ENCODE measurements at regions of chr14 and their contacts with region 1.

Region 1: GRCh38 chr14:22570132-22570949 is 18.7 kb downstream of the DAD1 start:
- DNase-seq: peak; percentile 97
- ATAC-seq: peak; percentile 90
- H3K4me3 ChIP-seq: peak overlapping the region; percentile 25 to 60 (median 37)
- H3K4me3 Mint-ChIP-seq: peak overlapping the region; percentile 44
- H3K27ac ChIP-seq: peak overlapping the region; percentile 74 to 78
- H3K27ac Mint-ChIP-seq: peak overlapping the region; percentile 54
- H3K4me1 ChIP-seq: peaks cover 46 to 53% of the 10 kb centered on the region in 2 donors
- H3K4me1 Mint-ChIP-seq: peaks cover 47% of the 10 kb centered on the region
- H3K27me3 ChIP-seq: no peaks in the 10 kb centered on the region
- H3K27me3 Mint-ChIP-seq: no peaks in the 10 kb centered on the region
- CTCF ChIP-seq: peak; percentile 97

Region 2: DNA sequence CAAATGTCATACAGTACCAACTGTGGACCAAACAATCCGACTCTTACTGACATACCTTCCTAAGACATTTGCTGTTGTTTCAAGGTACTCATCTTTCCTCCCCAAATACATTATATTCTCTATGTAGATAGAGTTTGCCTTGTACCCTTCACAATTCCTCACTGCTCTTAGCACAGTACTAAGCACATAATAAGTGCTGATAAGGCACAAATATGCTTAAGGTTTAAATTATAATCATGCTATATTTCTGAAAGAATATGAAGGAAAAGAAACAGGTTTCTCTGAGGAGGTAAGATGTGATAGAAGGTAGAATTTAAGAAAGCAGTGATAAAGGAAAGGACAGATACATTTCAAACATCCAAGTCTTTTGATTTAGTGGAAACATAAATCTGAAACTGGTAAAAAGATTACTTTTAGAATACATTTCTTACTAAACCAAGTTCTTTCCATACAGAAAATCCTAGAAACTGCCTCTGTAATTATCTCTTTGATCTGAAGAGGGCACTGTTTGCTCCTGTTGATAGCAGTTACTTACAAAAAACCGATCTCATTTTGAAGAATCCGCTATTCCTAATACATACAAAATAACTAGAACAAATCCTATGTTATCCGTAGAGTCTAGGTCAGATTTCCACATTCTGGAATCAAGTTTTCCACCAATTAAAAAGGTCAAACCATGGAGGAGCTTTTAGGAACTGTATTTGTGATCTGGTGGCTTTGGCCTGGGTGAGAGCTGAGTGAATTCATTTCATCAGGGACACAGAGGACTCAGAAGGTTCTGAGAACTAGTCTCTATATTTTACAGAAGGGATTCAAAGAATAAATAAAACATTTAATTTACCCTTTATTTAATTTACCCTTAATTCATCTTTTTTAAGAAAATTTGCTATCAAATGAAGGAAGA is 293.2 kb before region 1 on chr14:
- CTCF ChIA-PET with region 1: no interaction called
- POLR2A ChIA-PET with region 1: no interaction called
- intact Hi-C with region 1: no loop called
- DNase-seq: peak; percentile 46
- ATAC-seq: no peak
- H3K4me3 ChIP-seq: no peak overlapping the region
- H3K4me3 Mint-ChIP-seq: no peak overlapping the region
- H3K27ac ChIP-seq: no peak overlapping the region
- H3K27ac Mint-ChIP-seq: no peak overlapping the region
- H3K4me1 ChIP-seq: peaks cover 12 to 14% of the 10 kb centered on the region in 2 donors
- H3K4me1 Mint-ChIP-seq: peaks cover 16% of the 10 kb centered on the region
- H3K27me3 ChIP-seq: peaks cover 0 to 7% (median 2%) of the 10 kb centered on the region in 4 experiments
- H3K27me3 Mint-ChIP-seq: peaks cover 27% of the 10 kb centered on the region
- CTCF ChIP-seq: peak; percentile 91

Region 3: DNA sequence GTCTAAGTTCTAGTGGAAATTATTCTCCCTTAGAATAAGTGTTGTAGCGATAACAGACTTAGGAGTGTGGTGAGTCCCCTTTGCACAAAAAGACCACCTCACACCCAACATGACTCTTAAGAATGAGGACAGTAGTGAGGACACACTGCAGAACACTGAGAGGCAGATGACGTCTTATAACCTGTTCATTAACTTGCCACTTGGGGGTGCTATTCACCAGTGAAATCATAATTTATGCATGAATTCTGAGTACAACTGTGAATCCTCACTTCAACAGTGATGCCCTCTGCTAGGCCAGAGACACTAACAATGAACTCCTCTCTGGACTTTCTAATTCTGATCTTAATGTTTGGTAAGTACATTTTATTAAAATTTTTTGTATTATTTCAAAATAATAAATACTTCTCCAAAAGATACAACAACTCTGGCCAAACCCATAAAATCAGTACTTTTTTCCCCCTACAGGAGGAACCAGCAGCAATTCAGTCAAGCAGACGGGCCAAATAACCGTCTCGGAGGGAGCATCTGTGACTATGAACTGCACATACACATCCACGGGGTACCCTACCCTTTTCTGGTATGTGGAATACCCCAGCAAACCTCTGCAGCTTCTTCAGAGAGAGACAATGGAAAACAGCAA is 256.0 kb before region 1 on chr14:
- CTCF ChIA-PET with region 1: interaction called, 48 read pairs
- POLR2A ChIA-PET with region 1: interaction called, 3 read pairs
- intact Hi-C with region 1: loop called (anchors 1 kb)
- DNase-seq: peak; percentile 78
- ATAC-seq: peak; percentile 93
- H3K4me3 ChIP-seq: no peak overlapping the region
- H3K4me3 Mint-ChIP-seq: no peak overlapping the region
- H3K27ac ChIP-seq: no peak overlapping the region
- H3K27ac Mint-ChIP-seq: no peak overlapping the region
- H3K4me1 ChIP-seq: no peaks in the 10 kb centered on the region
- H3K4me1 Mint-ChIP-seq: peaks cover 5% of the 10 kb centered on the region
- H3K27me3 ChIP-seq: no peaks in the 10 kb centered on the region
- H3K27me3 Mint-ChIP-seq: no peaks in the 10 kb centered on the region
- CTCF ChIP-seq: peak; percentile 88

Region 4: GRCh38 chr14:22448905-22449599 is 121.3 kb before region 1 on chr14:
- CTCF ChIA-PET with region 1: interaction called, 12 read pairs
- POLR2A ChIA-PET with region 1: no interaction called
- intact Hi-C with region 1: no loop called
- DNase-seq: no peak
- ATAC-seq: peak; percentile 16
- H3K4me3 ChIP-seq: no peak overlapping the region
- H3K4me3 Mint-ChIP-seq: no peak overlapping the region
- H3K27ac ChIP-seq: peak overlapping the region in 1 of 2 donors; percentile 47
- H3K27ac Mint-ChIP-seq: peak overlapping the region; percentile 88
- H3K4me1 ChIP-seq: peaks cover 15 to 17% of the 10 kb centered on the region in 2 donors
- H3K4me1 Mint-ChIP-seq: peaks cover 23% of the 10 kb centered on the region
- H3K27me3 ChIP-seq: no peaks in the 10 kb centered on the region
- H3K27me3 Mint-ChIP-seq: no peaks in the 10 kb centered on the region
- CTCF ChIP-seq: no peak

Region 5: GRCh38 chr14:22519877-22520685 is 50.3 kb before region 1 on chr14:
- CTCF ChIA-PET with region 1: interaction called, 36 read pairs
- POLR2A ChIA-PET with region 1: no interaction called
- intact Hi-C with region 1: no loop called
- DNase-seq: no peak
- ATAC-seq: no peak
- H3K4me3 ChIP-seq: peak overlapping the region in 1 of 5 experiments; percentile 6
- H3K4me3 Mint-ChIP-seq: peak overlapping the region; percentile 55
- H3K27ac ChIP-seq: peak overlapping the region; percentile 56 to 68
- H3K27ac Mint-ChIP-seq: peak overlapping the region; percentile 91
- H3K4me1 ChIP-seq: peaks cover 64 to 91% of the 10 kb centered on the region in 2 donors
- H3K4me1 Mint-ChIP-seq: peaks cover 90% of the 10 kb centered on the region
- H3K27me3 ChIP-seq: no peaks in the 10 kb centered on the region
- H3K27me3 Mint-ChIP-seq: no peaks in the 10 kb centered on the region
- CTCF ChIP-seq: no peak

Region 6: DNA sequence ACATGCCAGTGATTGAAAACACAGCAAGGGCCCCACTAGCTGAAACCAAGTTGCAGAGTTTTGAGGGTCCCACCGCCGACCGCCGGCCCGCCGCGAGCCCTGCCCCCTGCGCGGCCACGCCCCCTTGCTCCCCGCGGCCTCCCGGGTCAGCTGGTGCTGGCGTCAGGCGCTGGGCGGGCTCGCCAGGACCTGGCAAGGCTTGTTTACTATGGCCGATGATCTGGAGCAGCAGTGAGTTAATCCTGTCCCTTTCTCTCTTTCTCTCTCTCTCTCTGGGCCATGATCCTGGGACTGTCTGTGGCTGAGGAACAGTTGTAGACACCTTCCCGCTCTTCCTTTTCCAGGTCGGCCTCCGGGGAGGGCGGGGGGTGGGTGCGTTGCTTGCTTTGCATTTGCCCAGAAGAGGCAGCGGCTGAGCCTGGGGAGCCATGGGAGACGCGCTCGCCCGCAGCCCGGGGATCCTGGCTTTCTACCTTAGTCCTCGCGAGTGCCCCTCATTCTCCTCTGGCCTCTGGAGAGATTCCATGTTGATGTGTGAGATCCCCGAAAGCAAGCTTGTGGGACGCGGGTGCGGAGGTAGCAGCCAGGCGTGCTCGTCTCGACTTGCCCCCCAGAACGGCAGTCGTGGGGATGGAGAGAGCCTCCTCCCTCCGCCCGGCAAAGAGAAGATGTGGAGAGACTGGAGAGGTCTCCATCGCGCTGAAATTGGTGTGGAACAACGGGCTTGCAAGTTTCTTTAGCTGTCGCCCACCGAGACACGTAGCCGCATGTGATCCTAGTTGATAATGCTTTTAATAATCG is 28.0 kb after region 1 on chr14 and contains the start of gene ABHD4:
- CTCF ChIA-PET with region 1: interaction called, 28 read pairs
- POLR2A ChIA-PET with region 1: no interaction called
- intact Hi-C with region 1: no loop called
- DNase-seq: peak; percentile 79
- ATAC-seq: peak; percentile 96
- H3K4me3 ChIP-seq: peak within 1 kb of the TSS; percentile 90 to 97 (median 92)
- H3K4me3 Mint-ChIP-seq: peak within 1 kb of the TSS; percentile 98
- H3K27ac ChIP-seq: peak within 1 kb of the TSS; percentile 46 to 76
- H3K27ac Mint-ChIP-seq: peak within 1 kb of the TSS; percentile 96
- H3K4me1 ChIP-seq: peaks cover 15 to 22% of the 10 kb centered on the region in 2 donors
- H3K4me1 Mint-ChIP-seq: peaks cover 28% of the 10 kb centered on the region
- H3K27me3 ChIP-seq: no peaks in the 10 kb centered on the region
- H3K27me3 Mint-ChIP-seq: peaks cover 3% of the 10 kb centered on the region
- CTCF ChIP-seq: peak; percentile 6
- total RNA-seq, gene ABHD4: 21.8 and 22.7 TPM in 2 replicates

Region 7: GRCh38 chr14:22634233-22634900 is 64.0 kb after region 1 on chr14:
- CTCF ChIA-PET with region 1: no interaction called
- POLR2A ChIA-PET with region 1: no interaction called
- intact Hi-C with region 1: no loop called
- DNase-seq: no peak
- ATAC-seq: no peak
- H3K4me3 ChIP-seq: no peak overlapping the region
- H3K4me3 Mint-ChIP-seq: no peak overlapping the region
- H3K27ac ChIP-seq: no peak overlapping the region
- H3K27ac Mint-ChIP-seq: no peak overlapping the region
- H3K4me1 ChIP-seq: no peaks in the 10 kb centered on the region
- H3K4me1 Mint-ChIP-seq: no peaks in the 10 kb centered on the region
- H3K27me3 ChIP-seq: peaks cover 0 to 9% (median 0%) of the 10 kb centered on the region in 4 experiments
- H3K27me3 Mint-ChIP-seq: peaks cover 33% of the 10 kb centered on the region
- CTCF ChIP-seq: no peak

Region 8: GRCh38 chr14:22822571-22823098 is 252.3 kb after region 1 on chr14:
- CTCF ChIA-PET with region 1: interaction called, 33 read pairs
- POLR2A ChIA-PET with region 1: no interaction called
- intact Hi-C with region 1: loop called (anchors 1 kb)
- DNase-seq: peak; percentile 87
- ATAC-seq: peak; percentile 67
- H3K4me3 ChIP-seq: peak overlapping the region; percentile 49 to 85 (median 56)
- H3K4me3 Mint-ChIP-seq: peak overlapping the region; percentile 88
- H3K27ac ChIP-seq: peak overlapping the region; percentile 65 to 71
- H3K27ac Mint-ChIP-seq: peak overlapping the region; percentile 94
- H3K4me1 ChIP-seq: peaks cover 31 to 47% of the 10 kb centered on the region in 2 donors
- H3K4me1 Mint-ChIP-seq: peaks cover 61% of the 10 kb centered on the region
- H3K27me3 ChIP-seq: no peaks in the 10 kb centered on the region
- H3K27me3 Mint-ChIP-seq: no peaks in the 10 kb centered on the region
- CTCF ChIP-seq: peak; percentile 82

Region 9: DNA sequence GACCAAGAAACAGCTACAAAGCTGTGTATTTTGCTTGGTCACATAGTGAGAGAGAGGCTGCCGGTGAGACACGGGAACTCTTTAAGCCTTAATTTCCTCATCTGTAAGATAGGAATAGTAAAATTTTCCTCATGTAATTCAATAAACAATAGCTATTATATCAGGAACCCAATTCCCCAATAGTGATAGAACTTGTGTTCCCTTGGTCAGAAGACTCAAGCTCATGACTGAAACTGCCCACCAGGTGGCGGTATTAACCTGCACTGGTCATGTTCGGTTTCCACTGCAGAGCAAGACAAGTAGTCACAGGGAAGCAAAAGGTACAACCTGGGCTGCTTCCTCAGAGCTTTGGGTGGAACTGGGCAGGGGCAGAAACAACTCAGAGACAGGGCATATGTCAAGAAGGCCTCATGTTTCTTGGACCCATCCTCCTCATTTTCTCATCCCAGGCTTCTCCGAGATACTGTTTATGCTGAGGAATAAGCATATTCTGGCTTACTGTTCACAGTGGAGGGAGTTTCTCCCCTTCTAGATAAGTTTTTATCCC is 416.2 kb after region 1 on chr14:
- CTCF ChIA-PET with region 1: interaction called, 105 read pairs
- POLR2A ChIA-PET with region 1: no interaction called
- intact Hi-C with region 1: loop called (anchors 1 kb)
- DNase-seq: peak; percentile 88
- ATAC-seq: peak; percentile 63
- H3K4me3 ChIP-seq: no peak overlapping the region
- H3K4me3 Mint-ChIP-seq: no peak overlapping the region
- H3K27ac ChIP-seq: no peak overlapping the region
- H3K27ac Mint-ChIP-seq: no peak overlapping the region
- H3K4me1 ChIP-seq: peaks cover 13 to 18% of the 10 kb centered on the region in 2 donors
- H3K4me1 Mint-ChIP-seq: no peaks in the 10 kb centered on the region
- H3K27me3 ChIP-seq: peaks cover 0 to 11% (median 4%) of the 10 kb centered on the region in 4 experiments
- H3K27me3 Mint-ChIP-seq: no peaks in the 10 kb centered on the region
- CTCF ChIP-seq: peak; percentile 89

Region 10: DNA sequence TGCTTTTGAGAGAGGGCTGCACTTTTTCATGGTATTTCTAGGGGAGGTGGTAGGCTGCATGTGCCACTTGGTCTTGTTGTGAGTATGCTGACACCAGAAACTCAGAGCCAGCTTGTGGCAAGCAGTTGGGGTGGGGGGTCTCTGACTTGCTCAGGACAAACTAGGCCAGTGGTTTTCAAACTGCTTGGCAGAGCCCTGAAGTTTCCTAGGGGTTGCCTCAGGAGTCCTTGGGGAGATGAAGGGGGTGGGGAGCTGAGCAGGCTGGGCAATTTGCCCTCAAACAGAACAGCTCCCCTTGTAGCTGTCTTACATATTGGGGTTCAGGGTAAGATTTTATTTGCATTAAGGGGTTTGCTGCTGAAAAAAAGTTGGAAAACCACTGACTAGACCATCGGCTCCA is 740.2 kb after region 1 on chr14:
- CTCF ChIA-PET with region 1: no interaction called
- POLR2A ChIA-PET with region 1: no interaction called
- intact Hi-C with region 1: no loop called
- DNase-seq: no peak
- ATAC-seq: no peak
- H3K4me3 ChIP-seq: no peak overlapping the region
- H3K4me3 Mint-ChIP-seq: no peak overlapping the region
- H3K27ac ChIP-seq: no peak overlapping the region
- H3K27ac Mint-ChIP-seq: no peak overlapping the region
- H3K4me1 ChIP-seq: peaks cover 10 to 24% of the 10 kb centered on the region in 2 donors
- H3K4me1 Mint-ChIP-seq: peaks cover 23% of the 10 kb centered on the region
- H3K27me3 ChIP-seq: no peaks in the 10 kb centered on the region
- H3K27me3 Mint-ChIP-seq: no peaks in the 10 kb centered on the region
- CTCF ChIP-seq: no peak

Region 11: DNA sequence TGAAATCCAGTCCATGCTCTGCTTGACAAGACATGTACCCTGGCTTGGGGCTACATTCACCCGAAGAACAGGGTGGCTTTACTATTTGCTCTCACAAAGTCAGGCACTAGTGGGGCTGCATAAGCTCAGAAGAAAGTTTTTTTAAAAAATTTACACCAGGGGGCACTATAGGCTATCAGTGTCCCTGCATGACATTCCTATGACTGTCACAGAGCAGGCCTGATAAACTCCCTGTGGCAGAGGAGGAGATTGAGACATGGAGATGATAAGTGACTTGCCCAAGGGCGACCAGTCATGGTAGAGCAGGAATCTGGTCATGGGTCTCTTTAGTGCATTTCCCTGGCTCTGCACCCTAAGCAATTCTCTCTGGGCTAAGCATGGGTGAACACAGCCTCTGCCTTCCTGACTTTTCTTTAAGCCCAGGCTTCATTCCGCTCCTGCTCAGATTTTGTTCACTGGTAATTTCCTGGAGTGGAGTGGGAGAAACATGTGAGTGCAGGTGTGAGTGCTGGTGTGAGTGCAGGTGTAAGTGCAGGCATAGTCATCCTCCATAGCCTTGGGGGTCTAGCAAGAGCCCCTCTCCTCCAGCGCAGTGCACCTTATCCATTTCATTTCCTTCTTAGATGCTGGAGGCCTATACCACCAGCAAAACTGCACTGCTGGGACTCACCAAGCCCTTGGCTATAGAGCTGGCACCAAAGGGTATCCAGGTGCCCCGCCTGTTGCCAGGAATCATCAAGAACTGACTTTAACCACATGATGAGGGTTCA is 1157.4 kb after region 1 on chr14:
- CTCF ChIA-PET with region 1: no interaction called
- POLR2A ChIA-PET with region 1: no interaction called
- intact Hi-C with region 1: no loop called
- DNase-seq: peak; percentile 10
- ATAC-seq: no peak
- H3K4me3 ChIP-seq: no peak overlapping the region
- H3K4me3 Mint-ChIP-seq: no peak overlapping the region
- H3K27ac ChIP-seq: no peak overlapping the region
- H3K27ac Mint-ChIP-seq: no peak overlapping the region
- H3K4me1 ChIP-seq: no peaks in the 10 kb centered on the region
- H3K4me1 Mint-ChIP-seq: no peaks in the 10 kb centered on the region
- H3K27me3 ChIP-seq: no peaks in the 10 kb centered on the region
- H3K27me3 Mint-ChIP-seq: peaks cover 13% of the 10 kb centered on the region
- CTCF ChIP-seq: no peak

Measured in B cell (primary cell).